ENCODE measurements at regions of chr16 and their contacts with region 1.

Region 1: DNA sequence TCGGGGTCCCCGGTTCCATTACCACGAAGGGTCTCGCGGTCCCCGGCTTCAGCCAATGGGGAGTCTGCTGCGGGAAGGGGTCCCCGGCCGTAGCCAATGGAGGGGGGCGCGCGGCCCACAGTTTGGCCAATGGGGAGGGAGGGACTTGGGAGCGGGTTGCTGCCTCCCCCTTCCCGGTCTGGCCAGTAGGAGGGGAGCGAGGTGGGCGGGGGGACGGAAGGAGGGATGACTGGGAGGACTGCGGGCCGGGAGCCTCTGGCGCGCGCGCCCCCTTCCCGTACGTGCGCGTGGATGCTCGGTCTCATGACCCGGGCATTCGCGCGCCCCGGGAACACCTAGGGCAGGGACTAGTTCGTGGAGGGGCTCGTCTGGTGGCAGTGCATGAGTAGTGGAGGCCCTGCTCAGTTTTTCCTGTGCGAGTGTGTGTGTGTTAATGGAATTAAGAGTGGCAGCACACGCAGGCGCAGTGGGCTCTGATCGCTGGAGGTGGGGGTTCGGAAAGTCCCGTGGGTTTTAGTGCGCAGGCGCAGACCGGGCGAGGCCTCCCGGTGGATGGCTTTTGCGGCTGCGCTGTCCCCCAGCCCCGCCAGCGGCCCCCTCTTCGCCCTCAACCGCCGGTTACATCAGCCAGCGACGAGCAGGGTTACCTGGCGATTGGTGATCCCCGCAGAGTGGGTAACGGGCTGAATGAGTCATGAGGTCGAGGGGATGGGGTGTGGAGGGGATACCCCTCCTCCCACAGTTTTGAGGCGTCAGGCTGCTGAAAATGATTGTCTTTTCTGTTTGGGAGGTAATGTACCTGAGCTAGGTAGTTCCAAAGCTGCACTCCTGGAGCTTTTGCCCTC is 1.3 kb downstream of the ATXN2L start:
- DNase-seq: peak; percentile 94 to 99 (median 95)
- H3K4me3 ChIP-seq: peak overlapping the region; percentile 85 to 97
- H3K4me3 Mint-ChIP-seq: peak overlapping the region; percentile 93 to 99 (median 96)
- H3K27ac ChIP-seq: peak overlapping the region; percentile 98
- H3K27ac Mint-ChIP-seq: peak overlapping the region; percentile 96 to 100 (median 98)
- H3K4me1 ChIP-seq: peaks cover 32% of the 10 kb centered on the region
- H3K4me1 Mint-ChIP-seq: peaks cover 27 to 58% (median 40%) of the 10 kb centered on the region in 4 donors
- H3K27me3 ChIP-seq: no peaks in the 10 kb centered on the region
- H3K27me3 Mint-ChIP-seq: peaks cover 0 to 5% of the 10 kb centered on the region in 2 donors

Region 2: DNA sequence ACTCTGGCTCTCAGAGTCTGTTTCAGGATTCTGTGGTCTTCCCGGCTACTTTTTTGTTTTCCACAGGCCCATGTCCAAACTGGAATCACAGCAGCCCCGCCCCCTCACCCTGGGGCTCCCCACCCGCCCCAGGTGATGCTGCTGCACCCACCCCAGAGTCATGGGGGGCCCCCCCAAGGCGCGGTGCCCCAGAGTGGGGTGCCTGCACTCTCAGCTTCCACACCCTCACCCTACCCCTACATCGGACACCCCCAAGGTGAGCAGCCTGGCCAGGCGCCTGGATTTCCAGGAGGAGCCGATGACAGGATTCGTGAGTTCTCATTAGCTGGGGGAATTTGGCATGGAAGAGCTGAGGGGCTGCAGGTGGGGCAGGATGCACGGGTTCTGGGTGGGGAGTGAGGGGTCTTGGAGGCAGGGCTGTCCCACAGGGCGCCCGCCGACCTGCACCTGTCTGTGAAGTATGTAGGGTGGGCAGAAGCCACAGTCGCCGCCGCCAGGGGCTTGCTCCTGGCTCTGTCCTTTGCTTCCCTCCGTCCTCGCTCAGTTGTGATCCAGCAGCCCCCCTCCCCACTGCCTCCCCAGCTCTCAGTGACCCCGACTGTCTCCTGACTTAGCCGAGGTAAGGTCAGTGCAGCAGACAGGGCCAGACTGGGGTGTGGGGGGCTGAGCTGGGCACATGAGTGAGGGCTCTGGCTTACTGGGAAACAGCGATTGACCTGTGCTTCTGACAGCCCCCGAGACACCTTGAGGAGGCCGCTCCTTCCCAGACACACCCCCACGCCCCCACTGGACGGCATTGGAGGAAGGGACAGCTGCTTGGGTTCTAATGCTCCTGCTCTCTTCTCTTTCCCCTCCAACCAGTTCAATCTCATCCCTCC is 12.0 kb after region 1 on chr16:
- CTCF ChIA-PET with region 1: interaction called, 3 read pairs
- POLR2A ChIA-PET with region 1: interaction called, 18 read pairs
- intact Hi-C with region 1: loop called (anchors 2 kb)
- DNase-seq: no peak
- H3K4me3 ChIP-seq: no peak overlapping the region
- H3K4me3 Mint-ChIP-seq: no peak overlapping the region
- H3K27ac ChIP-seq: no peak overlapping the region
- H3K27ac Mint-ChIP-seq: no peak overlapping the region
- H3K4me1 ChIP-seq: no peaks in the 10 kb centered on the region
- H3K4me1 Mint-ChIP-seq: peaks cover 0 to 9% (median 4%) of the 10 kb centered on the region in 4 donors
- H3K27me3 ChIP-seq: no peaks in the 10 kb centered on the region
- H3K27me3 Mint-ChIP-seq: no peaks in the 10 kb centered on the region

Region 3: DNA sequence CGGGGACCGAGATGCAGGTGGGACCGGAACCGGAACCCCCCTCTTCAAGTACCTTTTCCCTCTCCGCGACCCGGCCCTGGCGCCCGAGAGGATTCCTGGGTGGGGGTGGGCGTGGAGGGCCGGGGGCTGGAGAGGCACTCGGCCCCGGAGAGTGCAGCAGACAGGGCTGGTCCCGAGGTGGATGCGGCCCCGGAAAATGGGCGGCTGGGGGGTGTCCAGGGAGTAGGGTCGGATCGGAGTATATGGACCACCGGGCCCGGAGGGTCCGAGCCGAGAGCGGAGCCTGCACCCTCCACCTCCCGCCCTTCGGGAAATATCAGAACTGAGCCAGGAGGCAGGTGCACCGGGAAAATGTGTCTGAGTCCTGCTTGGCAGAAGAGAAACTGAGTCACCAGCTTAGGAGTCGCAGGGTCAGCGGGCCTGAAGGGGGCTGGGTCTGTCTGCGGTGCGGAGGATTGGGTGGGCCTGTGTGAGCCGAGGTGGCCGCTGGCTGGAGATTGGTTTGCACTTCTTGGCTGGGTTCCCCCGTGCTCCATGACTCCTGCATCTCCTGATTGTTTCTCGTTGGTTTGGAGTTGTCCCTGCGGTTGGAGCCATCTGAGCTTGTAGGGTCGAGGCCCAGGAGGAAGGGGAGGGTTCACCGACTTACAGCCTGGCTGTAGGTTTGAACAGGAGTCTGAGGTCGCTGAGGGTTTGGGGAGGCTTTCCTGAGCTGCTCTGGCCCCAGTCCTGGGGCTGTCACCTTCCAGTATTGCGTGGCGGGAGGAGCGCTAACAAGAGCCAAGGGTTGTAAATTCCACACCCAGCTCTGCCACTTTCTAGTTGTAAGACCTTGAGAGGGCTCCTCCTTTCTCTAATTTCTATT is 40.1 kb after region 1 on chr16:
- CTCF ChIA-PET with region 1: interaction called, 5 read pairs
- POLR2A ChIA-PET with region 1: interaction called, 56 read pairs
- intact Hi-C with region 1: no loop called
- DNase-seq: peak in 3 of 5 donors; percentile 15 to 62 (median 28)
- H3K4me3 ChIP-seq: peak overlapping the region; percentile 36 to 65
- H3K4me3 Mint-ChIP-seq: peak overlapping the region; percentile 95 to 99 (median 98)
- H3K27ac ChIP-seq: peak overlapping the region; percentile 85
- H3K27ac Mint-ChIP-seq: peak overlapping the region; percentile 95 to 100 (median 98)
- H3K4me1 ChIP-seq: peaks cover 25% of the 10 kb centered on the region
- H3K4me1 Mint-ChIP-seq: peaks cover 16 to 35% (median 22%) of the 10 kb centered on the region in 4 donors
- H3K27me3 ChIP-seq: no peaks in the 10 kb centered on the region
- H3K27me3 Mint-ChIP-seq: no peaks in the 10 kb centered on the region

Region 4: DNA sequence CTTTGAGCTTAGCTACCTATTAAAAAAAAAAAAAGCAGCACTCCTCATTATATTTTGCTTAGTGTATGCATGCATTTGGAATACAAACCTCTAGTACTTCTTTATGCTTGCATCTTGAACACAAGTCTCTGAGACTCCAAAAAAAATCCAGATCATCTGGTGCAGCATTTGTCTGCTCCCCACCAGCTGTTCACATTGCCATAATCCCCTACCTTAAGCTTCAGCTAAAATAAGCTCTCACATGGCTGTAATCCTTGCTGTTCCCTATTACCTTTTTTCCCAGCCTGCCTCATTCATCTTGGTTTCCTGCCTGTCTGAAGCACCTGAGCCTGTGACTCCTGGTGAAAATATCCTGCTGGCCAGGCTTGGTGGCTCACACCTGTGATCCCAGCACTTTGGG is 119.2 kb after region 1 on chr16:
- CTCF ChIA-PET with region 1: interaction called, 9 read pairs
- POLR2A ChIA-PET with region 1: interaction called, 7 read pairs
- intact Hi-C with region 1: loop called (anchors 1 kb)
- DNase-seq: no peak
- H3K4me3 ChIP-seq: no peak overlapping the region
- H3K4me3 Mint-ChIP-seq: no peak overlapping the region
- H3K27ac ChIP-seq: no peak overlapping the region
- H3K27ac Mint-ChIP-seq: peak overlapping the region in 1 of 7 donors; percentile 53
- H3K4me1 ChIP-seq: peaks cover 9% of the 10 kb centered on the region
- H3K4me1 Mint-ChIP-seq: peaks cover 6 to 9% (median 7%) of the 10 kb centered on the region in 4 donors
- H3K27me3 ChIP-seq: no peaks in the 10 kb centered on the region
- H3K27me3 Mint-ChIP-seq: no peaks in the 10 kb centered on the region

Region 5: GRCh38 chr16:28950648-28951409 is 126.7 kb after region 1 on chr16 and contains the start of gene NFATC2IP:
- CTCF ChIA-PET with region 1: interaction called, 9 read pairs
- POLR2A ChIA-PET with region 1: interaction called, 11 read pairs
- intact Hi-C with region 1: loop called (anchors 1 kb)
- DNase-seq: peak; percentile 99 to 100 (median 100)
- H3K4me3 ChIP-seq: peak within 1 kb of the TSS; percentile 12 to 66
- H3K4me3 Mint-ChIP-seq: peak within 1 kb of the TSS; percentile 93 to 99 (median 96)
- H3K27ac ChIP-seq: peak within 1 kb of the TSS; percentile 70
- H3K27ac Mint-ChIP-seq: peak within 1 kb of the TSS; percentile 68 to 96 (median 93)
- H3K4me1 ChIP-seq: peaks cover 28% of the 10 kb centered on the region
- H3K4me1 Mint-ChIP-seq: peaks cover 14 to 40% (median 29%) of the 10 kb centered on the region in 4 donors
- H3K27me3 ChIP-seq: no peaks in the 10 kb centered on the region
- H3K27me3 Mint-ChIP-seq: no peaks in the 10 kb centered on the region
- total RNA-seq, gene NFATC2IP: 105 to 115 TPM